Spleen (tissue), 13 donors: ENCODE measurements at regions of chr17 and their contacts with region 1.

Region 1: GRCh38 chr17:79839363-79840268 is at the start of gene CBX4:
- DNase-seq: peak; percentile 99
- H3K4me3 ChIP-seq: peak within 1 kb of the TSS; percentile 77 to 96 (median 88)
- H3K27ac ChIP-seq: peak within 1 kb of the TSS; percentile 93 to 99 (median 98)
- H3K4me1 ChIP-seq: peaks cover 50 to 89% (median 85%) of the 10 kb centered on the region in 6 donors
- H3K27me3 ChIP-seq: peaks cover 18 to 52% (median 51%) of the 10 kb centered on the region in 7 donors
- CTCF ChIP-seq: peak; percentile 37 to 88 (median 67)
- POLR2A ChIP-seq: peak in 2 of 3 donors; percentile 73 to 88
- total RNA-seq, gene CBX4: 23.4 to 48.0 (median 27.9) TPM

Region 2: GRCh38 chr17:79741751-79742588 is 97.6 kb before region 1 on chr17:
- intact Hi-C with region 1: loop called (anchors 10 kb)
- DNase-seq: peak; percentile 92
- H3K4me3 ChIP-seq: peak overlapping the region in 2 of 8 donors; percentile 14 to 43
- H3K27ac ChIP-seq: no peak overlapping the region
- H3K4me1 ChIP-seq: peaks cover 3 to 28% (median 19%) of the 10 kb centered on the region in 6 donors
- H3K27me3 ChIP-seq: peaks cover 0 to 87% (median 41%) of the 10 kb centered on the region in 7 donors
- CTCF ChIP-seq: peak; percentile 66 to 96 (median 91)
- POLR2A ChIP-seq: no peak

Region 3: DNA sequence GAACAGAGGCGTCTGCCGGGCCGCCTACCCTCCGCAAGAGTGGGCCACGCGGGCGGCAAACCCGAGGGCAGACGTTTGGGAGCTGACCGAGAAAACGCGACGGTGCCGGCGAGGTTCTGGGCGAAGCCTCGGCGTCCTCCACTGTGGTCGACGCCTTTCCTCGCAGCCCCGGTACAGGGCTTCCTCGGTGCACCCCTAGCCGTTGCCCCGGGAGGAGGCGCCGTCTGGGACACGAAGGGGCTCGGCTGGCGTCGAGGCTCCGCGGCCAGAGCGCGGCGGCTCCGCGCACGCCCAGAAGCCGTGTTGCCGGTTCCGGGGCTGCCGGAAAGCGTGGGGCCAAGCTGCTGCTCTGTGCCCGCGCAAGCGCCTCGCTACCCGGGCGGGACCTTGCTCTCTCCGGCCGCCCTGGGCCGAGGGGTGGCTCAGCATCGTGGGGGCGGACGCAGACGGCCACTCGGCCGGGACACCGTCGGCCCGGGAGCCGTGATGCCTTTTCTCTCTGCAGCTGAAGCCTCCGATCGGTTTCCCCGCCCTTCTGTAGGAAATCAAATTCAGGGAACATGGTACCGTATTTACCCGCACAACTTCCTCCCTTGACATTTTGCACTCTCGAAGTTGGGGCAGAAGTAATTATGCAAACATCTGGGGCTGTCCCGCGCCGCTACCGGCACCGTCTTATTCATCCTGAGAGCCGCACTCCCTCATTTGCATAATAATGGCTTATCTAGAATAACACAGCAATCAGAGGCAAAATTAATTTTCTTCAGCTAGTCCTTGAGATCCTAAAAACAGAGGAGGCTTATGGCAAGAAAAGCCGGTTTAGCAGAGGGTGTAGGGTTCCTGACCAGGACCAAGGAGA is 35.4 kb before region 1 on chr17:
- intact Hi-C with region 1: loop called (anchors 5 kb)
- DNase-seq: no peak
- H3K4me3 ChIP-seq: peak overlapping the region in 6 of 8 donors; percentile 17 to 61 (median 23)
- H3K27ac ChIP-seq: peak overlapping the region in 3 of 8 donors; percentile 21 to 35 (median 35)
- H3K4me1 ChIP-seq: peaks cover 15 to 66% (median 56%) of the 10 kb centered on the region in 6 donors
- H3K27me3 ChIP-seq: peaks cover 43 to 100% (median 99%) of the 10 kb centered on the region in 7 donors
- CTCF ChIP-seq: no peak
- POLR2A ChIP-seq: no peak

Region 4: GRCh38 chr17:79991140-79991923 is 151.7 kb after region 1 on chr17:
- intact Hi-C with region 1: loop called (anchors 10 kb)
- DNase-seq: peak; percentile 96
- H3K4me3 ChIP-seq: peak overlapping the region; percentile 30 to 79 (median 49)
- H3K27ac ChIP-seq: peak overlapping the region in 4 of 8 donors; percentile 15 to 90 (median 68)
- H3K4me1 ChIP-seq: peaks cover 26 to 95% (median 68%) of the 10 kb centered on the region in 6 donors
- H3K27me3 ChIP-seq: peaks cover 0 to 22% (median 0%) of the 10 kb centered on the region in 7 donors
- CTCF ChIP-seq: peak in 9 of 11 experiments; percentile 20 to 92 (median 83)
- POLR2A ChIP-seq: no peak